Activated T-helper 1 cell treated with anti-CD3 and anti-CD28 coated beads, Interleukin-12 subunit alpha, Interleukin-12 subunit beta, Interleukin-2, Interleukin-4 antibody, amounts not matched to agents 30 ng/mL and 10 ng/mL and 1 ng/mL, durations not matched to agents 14 hours and 24 hours and 36 hours (primary cell): ENCODE measurements at regions of chr6 and their contacts with region 1.

Region 1: GRCh38 chr6:139134817-139135581 is at the start of gene HECA:
- DNase-seq: peak; percentile 97
- H3K4me3 Mint-ChIP-seq: peak within 1 kb of the TSS; percentile 85
- H3K27ac Mint-ChIP-seq: peak within 1 kb of the TSS; percentile 84
- H3K4me1 Mint-ChIP-seq: peaks cover 72% of the 10 kb centered on the region
- H3K27me3 Mint-ChIP-seq: no peaks in the 10 kb centered on the region
- total RNA-seq, gene HECA: 49.1 and 49.9 TPM in 2 replicates

Region 2: GRCh38 chr6:139153855-139154254 is 18.9 kb after region 1 on chr6:
- intact Hi-C with region 1: loop called (anchors 1 kb)
- DNase-seq: no peak
- H3K4me3 Mint-ChIP-seq: peak overlapping the region; percentile 66
- H3K27ac Mint-ChIP-seq: peak overlapping the region; percentile 90
- H3K4me1 Mint-ChIP-seq: peaks cover 73% of the 10 kb centered on the region
- H3K27me3 Mint-ChIP-seq: no peaks in the 10 kb centered on the region

Region 3: GRCh38 chr6:139515511-139515910 is 380.5 kb after region 1 on chr6:
- intact Hi-C with region 1: no loop called
- DNase-seq: no peak
- H3K4me3 Mint-ChIP-seq: no peak overlapping the region
- H3K27ac Mint-ChIP-seq: peak overlapping the region; percentile 6
- H3K4me1 Mint-ChIP-seq: peaks cover 11% of the 10 kb centered on the region
- H3K27me3 Mint-ChIP-seq: peaks cover 3% of the 10 kb centered on the region